Colonic mucosa (tissue), 4 donors: ENCODE measurements at regions of chr1 and their contacts with region 1.

Region 1: GRCh38 chr1:223845810-223846682 is at the start of gene TP53BP2:
- DNase-seq: peak; percentile 85
- H3K4me3 ChIP-seq: peak within 1 kb of the TSS; percentile 66
- H3K27ac ChIP-seq: peak within 1 kb of the TSS; percentile 97
- H3K4me1 ChIP-seq: peaks cover 4% of the 10 kb centered on the region
- H3K27me3 ChIP-seq: no peaks in the 10 kb centered on the region
- CTCF ChIP-seq: peak; percentile 52
- total RNA-seq, gene TP53BP2: 28.8 to 39.6 TPM

Region 2: DNA sequence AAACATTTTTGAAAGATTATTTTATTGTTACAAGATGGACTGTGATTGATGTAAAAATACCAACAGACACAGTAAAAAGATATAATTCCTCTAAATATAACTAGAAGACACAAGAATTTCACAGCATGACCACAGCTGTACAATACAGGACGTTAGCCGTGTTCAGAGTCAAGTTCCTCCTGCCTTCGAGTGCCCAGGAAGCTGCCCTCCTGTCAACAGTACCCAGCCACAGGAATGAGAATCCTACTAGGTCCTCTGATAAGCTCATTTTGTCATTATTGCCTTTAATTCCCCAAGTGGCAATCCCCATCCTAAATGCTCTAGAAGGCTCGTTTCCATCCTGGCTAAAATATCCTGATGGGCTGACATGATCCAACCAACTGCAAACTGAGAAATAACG is 150.1 kb before region 1 on chr1:
- intact Hi-C with region 1: loop called (anchors 10 kb)
- DNase-seq: no peak
- H3K4me3 ChIP-seq: no peak overlapping the region
- H3K27ac ChIP-seq: no peak overlapping the region
- H3K4me1 ChIP-seq: no peaks in the 10 kb centered on the region
- H3K27me3 ChIP-seq: no peaks in the 10 kb centered on the region
- CTCF ChIP-seq: no peak

Region 3: DNA sequence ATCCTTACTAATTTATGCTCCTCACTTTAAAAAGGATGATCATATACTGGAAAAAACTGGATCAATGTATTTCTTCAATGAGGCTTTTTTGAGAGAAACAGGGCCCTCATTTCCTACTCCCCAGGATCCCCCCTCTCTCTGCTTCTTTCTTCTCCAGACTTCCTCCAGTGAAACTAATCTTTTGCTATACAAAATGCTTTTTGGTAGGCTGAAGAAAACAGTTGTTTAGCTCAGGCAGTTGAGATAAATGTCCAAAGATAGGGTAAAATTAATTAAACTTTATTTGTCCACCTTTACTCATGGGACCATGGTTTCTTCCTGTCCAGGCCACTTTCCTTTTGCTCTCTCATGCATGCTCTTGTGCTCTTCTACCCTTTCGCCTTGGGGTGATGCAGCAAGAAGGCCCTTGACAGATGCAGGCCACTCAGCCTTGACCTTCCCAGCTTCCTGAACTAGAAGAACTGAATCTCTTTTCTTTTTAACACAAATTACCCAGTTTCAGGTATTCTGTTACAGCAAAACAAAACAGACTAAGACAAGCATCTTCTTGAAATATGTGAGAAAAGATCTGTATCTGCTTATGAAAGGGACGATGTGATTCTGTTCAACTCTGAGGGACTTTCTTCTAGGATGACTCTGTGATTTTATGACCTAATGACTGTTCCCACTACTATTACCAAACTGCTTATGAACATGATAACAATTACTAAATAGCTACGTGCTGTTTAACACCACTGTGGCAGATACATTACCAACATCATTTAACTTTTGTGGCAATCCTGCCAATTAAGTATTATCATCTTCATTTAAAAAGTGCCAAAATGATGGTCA is 420.3 kb after region 1 on chr1:
- intact Hi-C with region 1: no loop called
- DNase-seq: no peak
- H3K4me3 ChIP-seq: no peak overlapping the region
- H3K27ac ChIP-seq: no peak overlapping the region
- H3K4me1 ChIP-seq: no peaks in the 10 kb centered on the region
- H3K27me3 ChIP-seq: no peaks in the 10 kb centered on the region
- CTCF ChIP-seq: no peak